ENCODE measurements at regions of chr5 and their contacts with region 1.

Region 1: DNA sequence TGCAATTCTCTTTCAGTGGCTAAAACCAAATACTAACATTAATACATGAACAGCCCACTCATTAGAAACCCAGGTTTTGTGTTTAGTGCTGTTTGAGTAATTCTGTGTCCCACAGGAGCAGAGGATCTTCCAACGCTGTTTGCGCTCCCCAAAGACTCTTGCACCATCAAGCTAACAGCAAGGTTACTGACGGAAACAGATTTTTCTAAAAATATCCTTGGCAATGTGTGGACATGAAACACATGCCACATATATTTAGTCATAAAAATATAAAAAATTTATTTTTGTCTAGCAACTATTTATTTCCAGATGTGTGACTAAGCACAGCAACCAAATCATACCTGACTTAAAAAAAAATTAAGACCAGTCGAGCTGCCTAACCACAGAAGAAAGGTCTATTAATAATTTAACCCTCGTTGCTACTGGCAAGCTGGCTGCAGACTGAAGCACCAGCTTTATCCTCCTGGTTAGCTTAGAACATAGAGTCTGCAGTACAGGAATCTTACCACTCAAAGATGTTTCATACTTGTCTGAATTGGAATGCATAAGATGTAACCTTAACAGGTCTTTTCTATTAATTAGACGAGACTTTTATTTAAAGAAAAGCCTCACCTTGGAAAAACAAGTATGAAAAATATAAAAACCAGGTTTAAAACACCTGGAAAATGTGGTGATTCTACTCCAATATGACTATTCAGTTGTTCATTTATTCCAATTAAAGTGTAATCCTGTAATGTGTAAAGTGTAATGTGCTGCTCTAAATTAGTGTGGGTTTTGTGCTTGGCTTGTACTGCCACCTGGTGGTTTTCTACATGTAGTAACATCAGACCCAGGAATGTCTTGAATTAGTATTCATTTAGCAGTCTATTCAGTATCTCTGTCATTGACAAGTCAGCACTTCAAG is 272.5 kb downstream of the EPB41L4A start:
- DNase-seq: peak; percentile 39 to 69
- ATAC-seq: peak; percentile 90 to 95 (median 91)
- H3K4me3 ChIP-seq: no peak overlapping the region
- H3K27ac ChIP-seq: peak overlapping the region; percentile 74
- H3K4me1 ChIP-seq: peaks cover 17% of the 10 kb centered on the region
- H3K27me3 ChIP-seq: no peaks in the 10 kb centered on the region
- CTCF ChIP-seq: peak; percentile 94

Region 2: GRCh38 chr5:110738812-110739651 is 1407.5 kb before region 1 on chr5 and contains the start of gene SLC25A46:
- intact Hi-C with region 1: loop called in 1 of 2 experiments (anchors 10 kb)
- DNase-seq: peak; percentile 85 to 91
- ATAC-seq: peak; percentile 97 to 99 (median 98)
- H3K4me3 ChIP-seq: peak within 1 kb of the TSS; percentile 91
- H3K27ac ChIP-seq: peak within 1 kb of the TSS; percentile 91
- H3K4me1 ChIP-seq: peaks cover 9% of the 10 kb centered on the region
- H3K27me3 ChIP-seq: no peaks in the 10 kb centered on the region
- CTCF ChIP-seq: no peak
- total RNA-seq, gene SLC25A46: 59.7 to 77.9 (median 63.8) TPM

Region 3: GRCh38 chr5:111530298-111530740 is 616.3 kb before region 1 on chr5:
- intact Hi-C with region 1: loop called (anchors 5 kb)
- DNase-seq: peak; percentile 57 to 74
- ATAC-seq: peak in 3 of 4 donors; percentile 71 to 73 (median 73)
- H3K4me3 ChIP-seq: no peak overlapping the region
- H3K27ac ChIP-seq: no peak overlapping the region
- H3K4me1 ChIP-seq: no peaks in the 10 kb centered on the region
- H3K27me3 ChIP-seq: no peaks in the 10 kb centered on the region
- CTCF ChIP-seq: no peak

Region 4: DNA sequence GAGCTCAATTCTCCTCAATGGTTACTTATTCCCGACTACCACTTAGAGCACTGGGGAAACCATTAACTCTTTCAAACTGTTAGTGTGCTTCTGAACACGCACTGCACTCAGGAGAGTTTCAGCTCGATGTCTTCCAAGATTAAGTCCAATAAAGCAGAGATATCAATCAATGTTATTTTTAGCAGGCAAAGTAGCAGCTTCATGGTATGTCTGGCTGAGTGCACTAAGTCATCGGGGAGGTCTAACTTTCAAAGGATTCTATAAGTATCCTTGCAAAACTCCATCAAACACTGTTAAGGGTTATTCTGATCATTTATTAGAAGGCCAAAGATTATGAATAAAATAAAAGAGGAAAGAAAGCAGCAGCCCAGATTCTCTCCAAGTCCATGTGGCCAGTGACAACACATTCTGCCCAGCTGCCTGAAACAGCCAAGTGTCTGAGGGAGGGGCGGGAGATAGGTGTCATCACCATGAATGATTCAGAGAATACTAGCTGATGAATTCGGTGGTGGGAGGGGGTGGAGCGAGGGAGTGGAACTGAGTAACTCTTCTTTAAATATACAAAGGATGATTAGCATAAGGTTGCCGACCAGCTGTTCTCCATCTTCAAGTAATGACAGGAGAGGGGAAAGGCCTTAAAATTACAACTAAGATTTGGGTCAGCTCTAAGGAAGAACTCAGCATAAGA is 410.8 kb before region 1 on chr5:
- intact Hi-C with region 1: loop called in 1 of 2 experiments (anchors 10 kb)
- DNase-seq: peak; percentile 77 to 88
- ATAC-seq: peak; percentile 95 to 99 (median 99)
- H3K4me3 ChIP-seq: peak overlapping the region; percentile 20
- H3K27ac ChIP-seq: peak overlapping the region; percentile 81
- H3K4me1 ChIP-seq: peaks cover 61% of the 10 kb centered on the region
- H3K27me3 ChIP-seq: no peaks in the 10 kb centered on the region
- CTCF ChIP-seq: no peak

Region 5: DNA sequence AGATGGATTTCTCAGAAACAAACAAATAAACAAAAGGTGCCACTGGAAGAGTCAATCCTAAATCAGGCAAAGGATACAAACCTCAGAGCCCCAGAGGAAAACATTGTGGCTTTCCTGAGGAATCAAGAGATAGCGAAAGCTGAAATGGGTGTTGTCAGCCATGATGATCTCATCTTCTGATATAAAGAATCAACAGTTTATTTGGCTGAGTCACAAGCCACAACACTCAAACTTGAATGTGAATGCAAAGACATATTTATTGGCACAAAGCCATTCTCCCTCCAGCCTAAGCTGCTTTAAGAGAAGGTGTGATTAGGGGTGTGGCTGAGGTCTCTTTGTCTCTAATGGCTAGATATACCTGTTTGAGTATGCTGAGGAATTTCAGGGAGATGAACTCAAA is 316.2 kb before region 1 on chr5:
- intact Hi-C with region 1: loop called in 1 of 2 experiments (anchors 2 kb)
- DNase-seq: no peak
- ATAC-seq: no peak
- H3K4me3 ChIP-seq: no peak overlapping the region
- H3K27ac ChIP-seq: no peak overlapping the region
- H3K4me1 ChIP-seq: no peaks in the 10 kb centered on the region
- H3K27me3 ChIP-seq: no peaks in the 10 kb centered on the region
- CTCF ChIP-seq: no peak

Region 6: GRCh38 chr5:112012104-112012503 is 134.5 kb before region 1 on chr5:
- intact Hi-C with region 1: no loop called
- DNase-seq: no peak
- ATAC-seq: no peak
- H3K4me3 ChIP-seq: no peak overlapping the region
- H3K27ac ChIP-seq: no peak overlapping the region
- H3K4me1 ChIP-seq: no peaks in the 10 kb centered on the region
- H3K27me3 ChIP-seq: no peaks in the 10 kb centered on the region
- CTCF ChIP-seq: no peak